Posterior vena cava (tissue), 2 donors: ENCODE measurements at regions of chr4 and their contacts with region 1.

Region 1: GRCh38 chr4:11424000-11424399 is 4.7 kb downstream of the HS3ST1 start:
- DNase-seq: no peak

Region 2: DNA sequence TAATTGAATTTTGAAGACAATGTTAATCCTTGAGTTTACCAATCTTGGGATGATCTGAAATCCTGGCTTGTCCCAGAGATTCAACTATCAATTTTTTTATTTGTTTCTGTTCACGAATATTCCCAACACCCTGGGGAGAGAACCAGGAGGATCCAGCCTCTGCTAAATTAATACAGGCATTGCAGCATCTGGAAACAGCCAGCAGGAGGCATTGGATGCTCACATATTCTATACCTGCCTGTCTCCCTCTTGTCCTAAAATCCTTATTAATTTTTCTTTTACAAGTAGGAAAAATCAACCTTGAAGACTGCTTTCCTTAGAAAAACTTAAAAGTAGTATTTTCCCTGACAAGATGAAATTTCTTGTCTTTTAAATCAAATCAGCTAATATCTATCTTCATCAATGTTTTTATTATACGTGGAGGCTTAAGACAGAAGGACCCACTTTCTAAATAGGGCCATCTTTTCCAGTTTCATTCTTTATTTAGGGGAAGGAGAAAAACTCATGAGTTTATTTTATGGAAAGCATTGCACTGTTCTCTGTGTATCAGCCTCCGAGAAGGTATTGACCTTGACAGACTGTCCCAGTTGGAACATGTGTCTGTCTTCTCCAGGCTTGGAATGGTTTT is 841.8 kb before region 1 on chr4:
- intact Hi-C with region 1: loop called (anchors 5 to 10 kb)
- DNase-seq: no peak